OCI-LY7 (cell line): ENCODE measurements at regions of chr20 and their contacts with region 1.

Region 1: GRCh38 chr20:58980700-58981627 is at the start of gene NELFCD:
- DNase-seq: peak; percentile 91
- H3K4me3 ChIP-seq: peak within 1 kb of the TSS; percentile 96
- H3K27ac ChIP-seq: peak within 1 kb of the TSS; percentile 54
- H3K4me1 ChIP-seq: peaks cover 54% of the 10 kb centered on the region
- CTCF ChIP-seq: no peak
- total RNA-seq, gene NELFCD: 83.4 and 90.7 TPM in 2 replicates

Region 2: DNA sequence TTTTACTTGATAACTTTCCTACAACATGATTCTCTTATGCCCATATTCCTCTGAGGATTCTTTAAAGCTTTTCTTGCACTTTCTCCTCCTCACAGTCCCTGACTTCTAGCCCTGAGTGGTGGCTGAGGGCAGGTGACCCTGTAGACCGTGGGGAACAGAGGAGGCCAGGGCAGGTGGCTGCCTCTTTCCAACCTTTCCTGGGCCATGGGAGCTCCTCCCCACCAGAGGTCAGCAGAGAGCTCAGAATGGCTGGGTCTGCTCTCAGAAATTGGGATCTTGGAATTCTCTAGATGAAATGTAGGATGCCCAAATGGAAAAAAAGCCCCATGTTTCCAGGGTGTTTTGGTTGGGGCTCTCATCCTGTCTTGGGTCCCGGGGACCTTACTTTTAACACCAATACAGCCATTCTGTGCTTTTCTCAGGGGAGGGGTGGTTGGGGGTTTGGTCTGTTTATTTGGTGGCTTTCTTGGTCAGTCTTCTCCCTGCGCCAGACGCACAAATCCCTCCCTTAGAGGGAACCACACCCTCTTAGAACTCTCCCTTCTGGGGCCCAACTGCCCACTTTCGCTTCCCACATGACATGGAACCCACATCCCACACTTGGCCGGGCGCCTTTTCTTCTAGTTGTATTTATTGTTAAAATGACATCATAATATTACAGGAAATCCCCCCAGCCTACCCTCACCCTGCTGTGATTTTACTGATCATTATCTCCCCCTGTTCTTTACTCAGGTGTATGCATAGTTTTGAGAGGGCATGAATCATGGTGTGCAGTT is 110.5 kb before region 1 on chr20:
- CTCF ChIA-PET with region 1: no interaction called
- POLR2A ChIA-PET with region 1: no interaction called
- intact Hi-C with region 1: loop called (anchors 5 kb)
- DNase-seq: peak; percentile 65
- H3K4me3 ChIP-seq: no peak overlapping the region
- H3K27ac ChIP-seq: no peak overlapping the region
- H3K4me1 ChIP-seq: peaks cover 16% of the 10 kb centered on the region
- CTCF ChIP-seq: peak; percentile 95

Region 3: DNA sequence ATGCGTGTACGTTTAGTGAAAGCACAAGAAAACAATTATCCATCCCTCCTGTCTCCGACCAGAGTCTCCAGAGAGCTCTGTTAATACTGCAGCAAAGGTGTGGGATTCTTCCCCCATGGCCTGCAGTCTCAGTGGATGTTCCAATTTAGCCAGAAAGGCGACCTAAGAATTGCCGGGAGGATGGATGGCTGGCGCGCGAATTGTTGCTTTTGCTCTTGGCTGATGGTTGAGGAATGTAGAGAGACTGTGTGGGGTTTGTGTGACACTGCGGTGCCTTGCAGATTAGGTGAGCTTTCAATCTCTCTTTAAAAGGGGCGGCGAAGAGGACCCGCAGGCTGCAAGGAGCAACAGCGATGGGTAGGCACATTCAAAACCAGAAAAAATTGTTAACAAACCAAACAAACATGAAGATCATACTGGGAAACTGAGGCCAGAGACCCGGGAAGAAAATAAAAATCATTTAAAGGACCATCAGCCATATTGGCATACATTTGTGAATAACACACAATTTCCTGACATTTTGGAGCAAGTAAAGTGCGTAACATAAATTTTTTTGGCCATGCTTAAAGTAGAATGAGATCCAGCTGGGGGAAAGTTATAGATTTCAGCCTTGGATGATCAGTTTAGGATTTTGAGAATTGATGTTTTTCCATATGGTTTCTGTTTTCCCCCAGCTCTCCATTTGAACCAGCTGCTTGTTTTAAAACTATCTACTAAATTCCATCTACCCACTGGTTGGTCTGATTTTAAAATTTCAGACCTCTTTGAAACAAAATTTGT is 82.1 kb before region 1 on chr20:
- CTCF ChIA-PET with region 1: no interaction called
- POLR2A ChIA-PET with region 1: interaction called, 10 read pairs
- intact Hi-C with region 1: loop called (anchors 5 kb)
- DNase-seq: no peak
- H3K4me3 ChIP-seq: no peak overlapping the region
- H3K27ac ChIP-seq: no peak overlapping the region
- H3K4me1 ChIP-seq: peaks cover 21% of the 10 kb centered on the region
- CTCF ChIP-seq: no peak

Region 4: DNA sequence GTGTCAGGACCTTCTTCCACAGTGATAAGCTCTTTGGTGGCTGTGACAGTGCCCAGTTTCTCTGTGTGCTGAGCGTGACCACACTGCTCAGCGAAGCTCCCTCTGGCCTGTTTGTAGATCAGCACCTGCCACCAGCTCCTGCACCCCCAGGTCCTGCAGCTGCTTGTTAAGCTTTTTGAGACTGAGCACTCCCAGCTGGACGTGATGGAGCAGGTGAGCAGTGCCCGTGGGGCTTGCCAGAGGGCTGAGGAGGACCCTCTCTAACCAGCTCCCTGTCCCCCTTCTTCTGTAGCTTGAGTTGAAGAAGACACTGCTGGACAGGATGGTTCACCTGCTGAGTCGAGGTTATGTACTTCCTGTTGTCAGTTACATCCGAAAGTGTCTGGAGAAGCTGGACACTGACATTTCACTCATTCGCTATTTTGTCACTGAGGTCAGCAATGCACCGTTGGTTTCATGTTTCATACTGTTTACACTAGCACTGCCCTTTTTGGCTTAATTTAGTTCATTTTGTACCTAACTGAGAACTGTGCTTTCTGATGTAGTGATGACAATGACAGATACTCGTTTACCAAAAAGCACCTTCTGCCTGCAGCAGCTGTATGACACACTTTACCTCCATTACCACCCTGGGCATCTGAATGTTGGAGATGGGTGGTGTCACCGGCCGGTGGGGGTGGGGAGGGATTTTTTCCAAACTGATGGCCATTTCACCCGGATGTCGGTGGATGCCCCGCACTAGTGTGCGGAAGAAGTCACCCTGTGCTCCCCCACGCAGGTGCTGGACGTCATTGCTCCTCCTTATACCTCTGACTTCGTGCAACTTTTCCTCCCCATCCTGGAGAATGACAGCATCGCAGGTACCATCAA is 12.6 kb after region 1 on chr20:
- CTCF ChIA-PET with region 1: no interaction called
- POLR2A ChIA-PET with region 1: interaction called, 13 read pairs
- intact Hi-C with region 1: no loop called
- DNase-seq: no peak
- H3K4me3 ChIP-seq: no peak overlapping the region
- H3K27ac ChIP-seq: peak overlapping the region; percentile 18
- H3K4me1 ChIP-seq: peaks cover 11% of the 10 kb centered on the region
- CTCF ChIP-seq: no peak

Region 5: GRCh38 chr20:59042796-59043660 is 62.1 kb after region 1 on chr20:
- CTCF ChIA-PET with region 1: no interaction called
- POLR2A ChIA-PET with region 1: interaction called, 4 read pairs
- intact Hi-C with region 1: loop called (anchors 5 kb)
- DNase-seq: peak; percentile 96
- H3K4me3 ChIP-seq: peak overlapping the region; percentile 86
- H3K27ac ChIP-seq: peak overlapping the region; percentile 77
- H3K4me1 ChIP-seq: peaks cover 58% of the 10 kb centered on the region
- CTCF ChIP-seq: no peak